Heart right ventricle (tissue), 16 donors: ENCODE measurements at regions of chr10 and their contacts with region 1.

Region 1: GRCh38 chr10:113704637-113705343 is 25.1 kb downstream of the CASP7 start:
- DNase-seq: no peak
- ATAC-seq: peak in 3 of 8 donors; percentile 34 to 51 (median 46)
- H3K4me3 ChIP-seq: no peak overlapping the region
- H3K27ac ChIP-seq: no peak overlapping the region
- H3K4me1 ChIP-seq: peaks cover 0 to 34% (median 7%) of the 10 kb centered on the region in 9 donors
- H3K27me3 ChIP-seq: no peaks in the 10 kb centered on the region
- CTCF ChIP-seq: peak; percentile 25 to 74 (median 64)

Region 2: DNA sequence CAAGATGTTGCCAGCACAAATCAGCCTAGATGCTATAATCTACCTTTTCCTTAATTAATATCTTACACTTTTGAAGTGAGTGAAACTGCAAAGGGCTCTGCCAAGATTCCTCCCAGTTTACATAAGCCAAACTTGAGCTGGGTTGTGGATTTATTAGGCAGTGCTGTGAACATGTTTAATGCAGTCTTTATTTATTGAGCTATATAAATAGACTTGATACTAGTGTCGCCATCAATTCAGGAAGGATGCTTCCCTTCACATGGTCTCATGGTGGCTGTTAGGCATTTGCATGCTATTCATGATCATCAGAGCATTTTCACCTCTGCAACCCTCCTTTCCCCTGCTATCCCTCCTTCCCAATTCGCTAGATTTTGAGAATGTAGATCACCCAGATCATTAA is 86.9 kb after region 1 on chr10:
- intact Hi-C with region 1: loop called in 3 of 10 experiments (anchors 5 to 10 kb)
- DNase-seq: no peak
- ATAC-seq: no peak
- H3K4me3 ChIP-seq: no peak overlapping the region
- H3K27ac ChIP-seq: no peak overlapping the region
- H3K4me1 ChIP-seq: peaks cover 0 to 6% (median 3%) of the 10 kb centered on the region in 9 donors
- H3K27me3 ChIP-seq: peaks cover 0 to 23% (median 0%) of the 10 kb centered on the region in 7 donors
- CTCF ChIP-seq: no peak

Region 3: GRCh38 chr10:113802997-113803396 is 98.2 kb after region 1 on chr10:
- intact Hi-C with region 1: loop called in 4 of 10 experiments (anchors 5 to 10 kb)
- DNase-seq: no peak
- ATAC-seq: no peak
- H3K4me3 ChIP-seq: no peak overlapping the region
- H3K27ac ChIP-seq: no peak overlapping the region
- H3K4me1 ChIP-seq: no peaks in the 10 kb centered on the region
- H3K27me3 ChIP-seq: peaks cover 0 to 10% (median 0%) of the 10 kb centered on the region in 7 donors
- CTCF ChIP-seq: no peak